Astrocyte of the cerebellum (primary cell): ENCODE measurements at regions of chr6 and their contacts with region 1.

Region 1: DNA sequence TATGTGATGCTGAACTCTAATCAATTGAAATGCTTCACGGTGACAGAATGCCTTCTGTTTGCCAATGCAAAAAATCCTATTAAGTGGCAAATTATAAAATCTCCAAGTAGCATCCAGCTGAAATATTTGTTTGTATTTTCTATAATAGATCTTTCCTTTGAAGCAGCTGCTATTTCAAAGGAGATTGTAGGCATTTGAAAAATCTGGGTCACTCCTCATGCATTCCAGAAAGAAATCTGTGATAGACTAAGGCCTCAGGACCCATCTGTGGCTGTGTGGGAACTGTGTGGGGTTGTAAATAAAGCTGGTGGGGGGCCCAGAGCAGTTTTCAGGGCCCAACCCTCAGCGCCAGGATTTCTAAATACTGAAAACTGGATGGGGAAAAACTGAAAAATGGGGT is 216.9 kb upstream of the ARG1 start:
- DNase-seq: no peak
- H3K4me3 ChIP-seq: no peak overlapping the region
- CTCF ChIP-seq: no peak

Region 2: GRCh38 chr6:131292145-131292938 is 63.8 kb before region 1 on chr6:
- in situ Hi-C with region 1: loop called (anchors 5 kb)
- DNase-seq: no peak
- H3K4me3 ChIP-seq: no peak overlapping the region
- CTCF ChIP-seq: no peak